Activated T-helper 1 cell treated with anti-CD3 and anti-CD28 coated beads, Interleukin-12 subunit alpha, Interleukin-12 subunit beta, Interleukin-2, Interleukin-4 antibody, amounts not matched to agents 30 ng/mL and 10 ng/mL and 1 ng/mL, durations not matched to agents 14 hours and 24 hours and 36 hours (primary cell): ENCODE measurements at regions of chr13 and their contacts with region 1.

Region 1: GRCh38 chr13:23921451-23921888 is 24.2 kb upstream of the C1QTNF9B start:
- DNase-seq: peak; percentile 24
- H3K4me3 Mint-ChIP-seq: no peak overlapping the region
- H3K27ac Mint-ChIP-seq: no peak overlapping the region
- H3K4me1 Mint-ChIP-seq: peaks cover 9% of the 10 kb centered on the region
- H3K27me3 Mint-ChIP-seq: peaks cover 39% of the 10 kb centered on the region

Region 2: GRCh38 chr13:23531446-23531845 is 390.0 kb before region 1 on chr13:
- intact Hi-C with region 1: no loop called
- DNase-seq: no peak
- H3K4me3 Mint-ChIP-seq: no peak overlapping the region
- H3K27ac Mint-ChIP-seq: no peak overlapping the region
- H3K4me1 Mint-ChIP-seq: no peaks in the 10 kb centered on the region
- H3K27me3 Mint-ChIP-seq: no peaks in the 10 kb centered on the region

Region 3: GRCh38 chr13:23980160-23980551 is 58.7 kb after region 1 on chr13:
- intact Hi-C with region 1: loop called (anchors 5 kb)
- DNase-seq: peak; percentile 89
- H3K4me3 Mint-ChIP-seq: peak overlapping the region; percentile 90
- H3K27ac Mint-ChIP-seq: peak overlapping the region; percentile 79
- H3K4me1 Mint-ChIP-seq: peaks cover 18% of the 10 kb centered on the region
- H3K27me3 Mint-ChIP-seq: peaks cover 53% of the 10 kb centered on the region

Region 4: GRCh38 chr13:23992781-23993679 is 71.6 kb after region 1 on chr13:
- intact Hi-C with region 1: loop called (anchors 5 kb)
- DNase-seq: no peak
- H3K4me3 Mint-ChIP-seq: no peak overlapping the region
- H3K27ac Mint-ChIP-seq: no peak overlapping the region
- H3K4me1 Mint-ChIP-seq: peaks cover 6% of the 10 kb centered on the region
- H3K27me3 Mint-ChIP-seq: peaks cover 20% of the 10 kb centered on the region

Region 5: DNA sequence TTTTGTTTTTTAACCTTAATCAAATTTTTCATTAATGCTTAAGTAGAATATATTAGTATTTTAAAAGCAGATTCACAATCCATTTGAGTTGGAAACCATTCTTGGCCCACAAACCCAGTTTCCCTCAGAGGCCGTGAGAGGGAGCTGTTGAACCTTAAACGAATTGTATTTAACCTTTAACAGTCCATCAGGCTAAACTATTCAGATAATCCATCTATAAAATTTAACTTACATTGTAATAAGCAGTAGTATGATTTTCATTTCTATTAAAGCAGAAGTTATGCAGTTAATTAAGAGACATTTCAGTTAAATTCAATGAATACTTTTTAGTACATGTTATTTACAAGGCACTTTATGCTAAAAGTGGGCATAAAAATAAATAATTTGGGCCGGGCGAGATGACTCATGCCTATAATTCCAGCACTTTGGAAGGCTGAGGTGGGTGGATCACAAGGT is 98.9 kb after region 1 on chr13:
- intact Hi-C with region 1: loop called (anchors 1 kb)
- DNase-seq: no peak
- H3K4me3 Mint-ChIP-seq: no peak overlapping the region
- H3K27ac Mint-ChIP-seq: no peak overlapping the region
- H3K4me1 Mint-ChIP-seq: peaks cover 6% of the 10 kb centered on the region
- H3K27me3 Mint-ChIP-seq: peaks cover 1% of the 10 kb centered on the region

Region 6: DNA sequence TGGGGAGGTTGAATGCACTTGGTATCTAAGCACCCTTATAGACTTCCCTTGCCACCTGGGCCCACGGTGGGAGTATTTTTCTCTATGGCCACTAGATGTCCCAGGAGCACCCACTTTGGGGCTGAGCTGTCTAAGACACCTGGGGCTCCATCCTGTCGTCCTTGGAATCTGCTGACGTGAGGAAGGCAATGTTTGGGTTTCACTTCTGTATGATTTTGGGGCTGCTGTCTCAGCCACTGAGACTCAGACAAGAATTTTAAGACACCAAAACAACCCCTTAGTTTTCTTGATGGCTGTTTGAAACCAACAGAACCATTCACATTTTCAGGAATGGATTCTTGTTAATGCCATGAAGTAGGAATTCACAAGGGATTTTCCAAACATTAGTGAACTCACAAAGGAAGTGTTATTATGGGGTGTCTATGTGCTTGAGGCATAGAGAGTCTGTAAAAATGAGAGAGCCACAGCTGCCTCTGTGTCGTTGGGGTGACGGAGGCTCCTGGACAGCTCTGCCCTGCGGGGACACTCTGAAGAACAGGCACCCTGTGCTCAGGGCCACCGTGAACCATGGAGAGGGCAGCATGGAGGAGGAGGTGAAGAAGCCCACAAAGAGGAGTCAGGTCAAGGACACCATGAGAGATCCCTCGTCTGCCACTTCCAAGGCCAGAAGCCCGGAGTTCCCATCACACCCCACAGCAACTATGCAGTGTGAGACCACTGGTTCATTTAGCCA is 132.2 kb after region 1 on chr13:
- intact Hi-C with region 1: loop called (anchors 1 kb)
- DNase-seq: peak; percentile 55
- H3K4me3 Mint-ChIP-seq: no peak overlapping the region
- H3K27ac Mint-ChIP-seq: no peak overlapping the region
- H3K4me1 Mint-ChIP-seq: peaks cover 20% of the 10 kb centered on the region
- H3K27me3 Mint-ChIP-seq: peaks cover 15% of the 10 kb centered on the region

Region 7: DNA sequence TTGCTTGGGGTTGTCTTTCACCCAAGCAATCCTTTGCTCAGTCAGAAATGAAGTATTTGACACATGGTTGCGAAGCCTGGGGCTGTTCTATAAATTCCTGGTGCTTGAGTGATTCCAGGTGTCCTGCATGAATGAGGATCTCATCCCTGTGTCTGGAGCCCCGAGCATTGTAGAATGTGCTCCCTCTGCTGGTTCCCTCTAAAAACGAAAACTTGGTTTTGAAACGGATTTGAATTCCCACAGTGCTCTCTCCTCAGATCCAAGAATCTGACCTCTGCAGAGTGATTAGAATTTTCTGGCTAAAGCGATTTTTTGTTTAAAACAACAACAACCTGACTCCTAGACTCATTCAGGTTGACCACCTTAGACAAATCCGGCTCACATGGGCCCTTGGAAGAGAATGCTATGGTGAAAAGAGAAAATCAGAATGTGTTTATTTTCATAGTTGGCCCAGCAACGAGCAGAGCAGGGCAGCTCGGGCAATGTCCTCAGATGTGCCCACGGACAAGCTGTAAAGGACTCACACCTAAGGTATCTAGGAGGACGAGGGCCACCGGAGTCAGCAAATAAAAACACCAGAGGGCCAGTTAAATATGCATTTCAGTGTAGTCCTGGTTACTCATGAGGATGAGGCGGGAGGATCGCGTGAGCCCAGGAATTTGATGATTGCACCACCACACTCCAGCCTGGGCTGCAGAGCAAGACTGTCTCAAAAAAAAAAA is 750.1 kb after region 1 on chr13:
- intact Hi-C with region 1: no loop called
- DNase-seq: no peak
- H3K4me3 Mint-ChIP-seq: no peak overlapping the region
- H3K27ac Mint-ChIP-seq: no peak overlapping the region
- H3K4me1 Mint-ChIP-seq: peaks cover 15% of the 10 kb centered on the region
- H3K27me3 Mint-ChIP-seq: peaks cover 17% of the 10 kb centered on the region